Activated CD4-positive, alpha-beta T cell treated with anti-CD3 and anti-CD28 coated beads for 36 hours (primary cell): ENCODE measurements at regions of chr9 and their contacts with region 1.

Region 1: DNA sequence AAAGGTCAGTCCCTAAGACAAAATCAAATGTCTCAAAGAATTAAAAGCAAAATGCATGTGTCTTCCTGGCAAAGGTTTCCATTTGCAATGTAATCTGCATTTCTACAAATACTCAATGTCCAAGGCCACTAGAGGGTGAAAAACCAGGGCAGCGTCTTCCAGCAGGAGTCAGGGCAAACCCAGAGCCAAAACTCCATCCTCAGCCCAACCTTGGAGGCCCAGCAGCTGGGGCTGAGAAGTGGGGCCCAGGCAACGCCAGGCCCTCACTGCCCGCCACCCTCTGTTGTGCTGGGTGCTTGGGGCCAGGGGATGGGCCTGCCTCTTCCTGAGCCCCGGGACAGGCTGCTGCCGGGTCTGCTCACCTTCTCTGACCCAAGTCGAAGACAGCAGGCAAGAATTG is 200.1 kb downstream of the PAX5 start:
- DNase-seq: no peak
- ATAC-seq: no peak
- H3K4me3 Mint-ChIP-seq: no peak overlapping the region
- H3K27ac Mint-ChIP-seq: no peak overlapping the region
- H3K4me1 Mint-ChIP-seq: no peaks in the 10 kb centered on the region
- H3K27me3 Mint-ChIP-seq: no peaks in the 10 kb centered on the region

Region 2: GRCh38 chr9:36461323-36461722 is 372.6 kb before region 1 on chr9:
- CTCF ChIA-PET with region 1: no interaction called
- POLR2A ChIA-PET with region 1: no interaction called
- intact Hi-C with region 1: no loop called
- DNase-seq: no peak
- ATAC-seq: no peak
- H3K4me3 Mint-ChIP-seq: no peak overlapping the region
- H3K27ac Mint-ChIP-seq: no peak overlapping the region
- H3K4me1 Mint-ChIP-seq: peaks cover 56% of the 10 kb centered on the region
- H3K27me3 Mint-ChIP-seq: no peaks in the 10 kb centered on the region

Region 3: DNA sequence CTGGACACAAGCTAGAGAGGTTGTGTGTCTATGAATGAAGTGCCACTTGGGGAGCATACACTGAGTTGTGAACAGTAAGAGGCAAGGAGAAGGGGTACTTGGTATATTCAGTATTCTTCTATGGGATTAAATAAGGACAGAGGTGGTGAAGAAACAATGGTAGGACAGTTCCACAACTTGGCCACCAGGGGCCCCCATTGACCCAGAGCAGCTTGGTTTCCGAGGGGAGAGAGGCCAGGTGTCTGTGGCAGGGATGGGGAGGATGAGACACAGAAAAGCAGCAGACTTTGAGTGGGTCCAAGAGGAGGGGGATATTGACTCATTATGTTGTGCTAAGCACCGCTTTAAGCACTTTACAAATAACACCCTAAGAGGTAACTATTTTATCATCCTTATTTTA is 40.7 kb before region 1 on chr9:
- CTCF ChIA-PET with region 1: no interaction called
- POLR2A ChIA-PET with region 1: no interaction called
- intact Hi-C with region 1: loop called in 1 of 2 experiments (anchors 5 kb)
- DNase-seq: peak; percentile 47
- ATAC-seq: no peak
- H3K4me3 Mint-ChIP-seq: no peak overlapping the region
- H3K27ac Mint-ChIP-seq: no peak overlapping the region
- H3K4me1 Mint-ChIP-seq: no peaks in the 10 kb centered on the region
- H3K27me3 Mint-ChIP-seq: peaks cover 2% of the 10 kb centered on the region

Region 4: DNA sequence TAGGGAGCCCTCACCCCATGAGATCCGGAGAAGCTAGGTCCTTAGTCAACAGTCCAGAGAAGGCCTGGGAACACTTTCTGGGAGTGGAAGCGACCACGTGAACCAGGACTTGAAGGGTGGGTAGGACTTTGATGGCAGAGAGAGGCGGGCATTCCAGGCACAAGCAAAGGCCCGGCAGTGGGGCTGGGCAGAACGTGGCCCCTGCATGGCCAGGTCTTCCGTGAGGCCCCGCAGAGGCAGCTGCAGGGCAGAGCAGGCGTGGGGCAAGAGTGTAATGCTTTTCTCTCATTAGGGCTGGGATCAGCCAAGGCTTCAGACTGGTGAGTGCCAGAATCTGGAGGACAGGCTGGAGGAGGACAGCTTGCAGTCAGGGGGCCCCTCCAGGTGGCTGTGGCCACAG is 16.0 kb after region 1 on chr9:
- CTCF ChIA-PET with region 1: no interaction called
- POLR2A ChIA-PET with region 1: no interaction called
- intact Hi-C with region 1: no loop called
- DNase-seq: no peak
- ATAC-seq: no peak
- H3K4me3 Mint-ChIP-seq: no peak overlapping the region
- H3K27ac Mint-ChIP-seq: no peak overlapping the region
- H3K4me1 Mint-ChIP-seq: no peaks in the 10 kb centered on the region
- H3K27me3 Mint-ChIP-seq: peaks cover 2% of the 10 kb centered on the region